ENCODE measurements at regions of chr4 and their contacts with region 1.

Region 1: DNA sequence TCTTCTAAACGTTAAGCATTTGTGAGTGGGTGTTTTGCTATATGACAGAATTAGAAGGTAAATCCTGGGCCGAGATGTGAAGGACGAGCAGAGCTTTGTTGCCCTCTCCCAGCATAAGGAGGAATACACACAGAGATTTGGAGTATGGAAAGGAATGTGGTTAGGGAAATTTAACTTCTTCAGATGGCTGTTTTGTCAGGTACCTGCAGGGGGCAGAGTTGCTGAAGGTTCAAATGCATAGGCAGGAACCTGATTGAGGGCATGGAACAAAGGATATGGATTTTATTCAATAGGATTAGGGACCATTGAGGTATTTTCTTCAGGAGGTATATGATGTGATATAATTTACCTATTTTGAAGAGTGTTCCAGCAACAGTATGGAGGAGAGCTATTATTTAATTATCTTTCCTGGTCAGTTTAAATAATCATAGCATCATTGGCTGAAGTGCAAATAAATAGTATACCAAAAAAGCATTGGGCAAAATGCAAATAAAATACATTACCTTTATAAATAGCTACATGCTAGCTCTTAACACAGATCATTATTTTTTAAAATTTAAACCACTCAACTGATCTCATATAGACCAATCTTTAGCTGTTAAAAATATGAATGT is 143.6 kb downstream of the SLIT2 start:
- DNase-seq: no peak
- H3K4me3 ChIP-seq: no peak overlapping the region
- H3K27ac ChIP-seq: no peak overlapping the region
- H3K4me1 ChIP-seq: no peaks in the 10 kb centered on the region
- H3K27me3 ChIP-seq: no peaks in the 10 kb centered on the region
- CTCF ChIP-seq: peak in 1 of 3 donors; percentile 16
- POLR2A ChIP-seq: no peak

Region 2: DNA sequence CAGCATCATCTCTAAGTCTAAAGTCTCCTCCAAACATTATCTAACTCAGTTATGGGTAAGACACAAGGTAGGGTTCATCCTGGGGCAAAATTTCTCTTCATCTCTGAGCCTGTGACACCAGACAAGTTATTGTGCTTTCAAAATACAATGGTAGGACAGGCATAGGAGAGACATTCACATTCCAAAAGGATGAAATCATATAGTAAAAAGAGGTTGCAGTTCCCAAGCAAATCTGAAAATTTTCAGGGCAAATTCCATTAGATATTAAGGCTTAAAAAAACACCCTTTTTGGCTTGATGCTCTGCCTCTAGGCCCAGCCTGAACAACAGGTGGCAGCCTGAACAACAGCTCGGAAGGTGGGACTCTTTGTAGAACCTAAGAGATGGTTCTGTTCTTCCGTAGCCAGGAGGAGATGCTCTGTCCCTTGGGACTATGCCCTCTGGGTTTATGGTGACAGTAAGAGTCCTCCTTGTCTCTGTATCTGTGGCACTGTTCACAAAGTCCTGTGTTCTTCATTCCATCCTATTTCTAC is 591.8 kb before region 1 on chr4:
- intact Hi-C with region 1: no loop called
- DNase-seq: no peak
- H3K4me3 ChIP-seq: no peak overlapping the region
- H3K27ac ChIP-seq: no peak overlapping the region
- H3K4me1 ChIP-seq: no peaks in the 10 kb centered on the region
- H3K27me3 ChIP-seq: no peaks in the 10 kb centered on the region
- CTCF ChIP-seq: no peak
- POLR2A ChIP-seq: no peak

Region 3: GRCh38 chr4:19880206-19880605 is 515.1 kb before region 1 on chr4:
- intact Hi-C with region 1: loop called (anchors 10 kb)
- DNase-seq: no peak
- H3K4me3 ChIP-seq: no peak overlapping the region
- H3K27ac ChIP-seq: no peak overlapping the region
- H3K4me1 ChIP-seq: no peaks in the 10 kb centered on the region
- H3K27me3 ChIP-seq: no peaks in the 10 kb centered on the region
- CTCF ChIP-seq: no peak
- POLR2A ChIP-seq: no peak

Measured in breast epithelium (tissue), 4 donors.